ENCODE measurements at regions of chr5 and their contacts with region 1.

Region 1: GRCh38 chr5:149141224-149141956 is at the start of gene ABLIM3:
- DNase-seq: peak; percentile 74
- ATAC-seq: peak; percentile 97
- H3K4me3 Mint-ChIP-seq: peak within 1 kb of the TSS; percentile 13
- H3K27ac Mint-ChIP-seq: no peak within 1 kb of the TSS
- H3K4me1 Mint-ChIP-seq: peaks cover 2% of the 10 kb centered on the region
- H3K27me3 Mint-ChIP-seq: peaks cover 40% of the 10 kb centered on the region
- total RNA-seq, gene ABLIM3: 0.21 TPM in 1 of 2 experiments, not detected in the other

Region 2: DNA sequence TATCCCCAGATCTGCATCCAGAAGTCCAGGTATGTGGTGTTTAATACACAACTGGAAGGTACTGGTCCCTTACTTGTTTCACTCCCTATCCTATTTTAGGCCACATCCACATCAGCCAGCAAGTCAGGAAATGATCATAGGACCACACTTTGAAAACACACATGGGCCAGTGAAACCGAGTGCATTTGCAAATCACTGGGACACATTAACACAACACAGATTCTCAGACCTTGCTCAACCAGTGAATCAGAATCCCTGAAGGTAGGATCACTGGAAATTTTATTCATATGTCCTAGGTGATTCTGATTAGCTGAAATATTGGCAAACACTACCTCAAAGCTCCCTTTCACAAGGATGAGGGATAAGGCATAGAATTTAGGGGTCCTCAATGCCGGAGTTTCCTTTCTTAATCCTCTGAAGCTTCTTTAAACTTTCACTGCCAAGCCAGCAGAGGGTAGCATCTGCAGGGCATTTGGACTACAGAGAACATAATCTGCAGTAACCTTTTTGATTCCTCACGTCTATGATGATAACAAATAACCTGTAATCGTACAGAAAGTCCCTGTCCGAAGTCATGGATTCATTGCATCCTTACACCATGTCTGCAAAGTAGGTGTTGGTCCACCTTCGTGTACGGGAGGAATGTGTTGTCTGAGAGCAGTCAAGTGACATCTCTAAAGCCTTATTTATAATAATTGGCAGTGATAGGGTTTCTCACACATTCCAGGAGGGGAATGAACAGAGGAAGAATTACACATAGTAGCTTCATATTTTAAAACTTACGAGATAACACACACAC is 11.1 kb before region 1 on chr5:
- CTCF ChIA-PET with region 1: interaction called, 15 read pairs
- DNase-seq: no peak
- ATAC-seq: no peak
- H3K4me3 Mint-ChIP-seq: no peak overlapping the region
- H3K27ac Mint-ChIP-seq: no peak overlapping the region
- H3K4me1 Mint-ChIP-seq: no peaks in the 10 kb centered on the region
- H3K27me3 Mint-ChIP-seq: peaks cover 53% of the 10 kb centered on the region

Region 3: GRCh38 chr5:149268928-149269557 is 127.7 kb after region 1 on chr5:
- CTCF ChIA-PET with region 1: interaction called, 65 read pairs
- DNase-seq: no peak
- ATAC-seq: peak; percentile 67
- H3K4me3 Mint-ChIP-seq: no peak overlapping the region
- H3K27ac Mint-ChIP-seq: no peak overlapping the region
- H3K4me1 Mint-ChIP-seq: peaks cover 6% of the 10 kb centered on the region
- H3K27me3 Mint-ChIP-seq: peaks cover 60% of the 10 kb centered on the region

Measured in activated CD8-positive, alpha-beta memory T cell treated with anti-CD3 and anti-CD28 coated beads, Interleukin-2, amount 10 ng/mL, durations not matched to agents 7 days and 5 days (primary cell).